A673 (cell line): ENCODE measurements at regions of chr4 and their contacts with region 1.

Region 1: GRCh38 chr4:183249857-183250256 is 70.2 kb downstream of the CLDN22 start:
- DNase-seq: peak; percentile 62
- H3K4me3 ChIP-seq: no peak overlapping the region
- H3K27ac ChIP-seq: no peak overlapping the region
- H3K4me1 ChIP-seq: no peaks in the 10 kb centered on the region
- H3K27me3 ChIP-seq: no peaks in the 10 kb centered on the region
- CTCF ChIP-seq: peak; percentile 57

Region 2: DNA sequence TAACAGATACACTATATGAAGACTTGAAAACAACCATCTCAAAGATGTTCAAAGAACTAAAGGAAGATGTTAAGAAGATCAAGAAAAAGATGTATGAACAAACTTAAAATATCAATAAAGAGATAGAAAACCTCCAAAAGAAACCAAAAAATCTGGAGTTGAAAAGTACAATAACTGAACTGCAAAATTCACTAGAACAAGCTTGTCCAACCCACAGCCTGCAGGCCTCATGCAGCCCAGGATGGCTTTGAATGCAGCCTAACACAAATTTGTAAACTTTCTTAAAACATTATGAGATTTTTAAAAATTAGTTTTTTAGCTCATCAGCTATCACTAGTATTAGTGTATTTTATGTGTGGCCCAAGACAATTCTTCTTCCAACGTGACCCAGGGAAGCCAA is 255.7 kb before region 1 on chr4:
- CTCF ChIA-PET with region 1: no interaction called
- POLR2A ChIA-PET with region 1: no interaction called
- intact Hi-C with region 1: no loop called
- DNase-seq: no peak
- H3K4me3 ChIP-seq: no peak overlapping the region
- H3K27ac ChIP-seq: no peak overlapping the region
- H3K4me1 ChIP-seq: no peaks in the 10 kb centered on the region
- H3K27me3 ChIP-seq: no peaks in the 10 kb centered on the region
- CTCF ChIP-seq: no peak

Region 3: DNA sequence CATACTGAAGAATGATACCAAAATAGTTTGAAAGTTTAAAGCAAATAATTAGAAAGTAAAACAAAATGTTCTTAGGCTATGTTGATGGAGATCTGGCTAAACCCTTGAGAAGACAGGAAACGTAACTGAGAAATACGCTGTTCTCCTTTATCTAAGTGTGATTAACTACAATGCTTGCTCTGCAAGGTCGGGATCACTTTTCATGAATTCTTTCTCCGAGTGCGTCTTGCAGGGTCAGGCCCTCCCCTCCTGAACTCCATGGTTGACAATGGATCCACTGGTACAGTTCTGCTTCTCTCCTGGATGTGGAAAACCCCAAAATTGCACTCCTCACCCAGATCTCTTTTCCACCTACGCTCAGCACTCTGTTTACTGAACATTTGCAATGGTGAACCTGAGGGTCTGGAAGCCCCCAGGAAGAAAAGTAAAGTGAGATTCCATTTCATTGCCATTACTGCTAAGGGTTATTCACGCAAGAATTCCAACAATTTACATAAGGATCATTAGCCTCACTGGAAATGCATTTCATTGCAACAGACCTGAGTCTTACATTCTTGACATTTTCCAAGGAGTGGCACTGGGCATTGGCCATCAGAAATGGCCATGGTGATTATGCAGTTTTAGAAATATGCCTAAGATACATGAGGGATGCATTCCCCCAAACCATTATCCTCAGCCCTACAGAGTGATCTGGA is 175.4 kb before region 1 on chr4:
- CTCF ChIA-PET with region 1: interaction called, 23 read pairs
- POLR2A ChIA-PET with region 1: no interaction called
- intact Hi-C with region 1: loop called (anchors 1 kb)
- DNase-seq: no peak
- H3K4me3 ChIP-seq: no peak overlapping the region
- H3K27ac ChIP-seq: no peak overlapping the region
- H3K4me1 ChIP-seq: peaks cover 25% of the 10 kb centered on the region
- H3K27me3 ChIP-seq: no peaks in the 10 kb centered on the region
- CTCF ChIP-seq: no peak

Region 4: GRCh38 chr4:183304538-183304937 is 54.7 kb after region 1 on chr4:
- CTCF ChIA-PET with region 1: no interaction called
- POLR2A ChIA-PET with region 1: no interaction called
- intact Hi-C with region 1: no loop called
- DNase-seq: no peak
- H3K4me3 ChIP-seq: no peak overlapping the region
- H3K27ac ChIP-seq: no peak overlapping the region
- H3K4me1 ChIP-seq: no peaks in the 10 kb centered on the region
- H3K27me3 ChIP-seq: no peaks in the 10 kb centered on the region
- CTCF ChIP-seq: no peak